Mammary epithelial cell (primary cell): ENCODE measurements at regions of chr3 and their contacts with region 1.

Region 1: DNA sequence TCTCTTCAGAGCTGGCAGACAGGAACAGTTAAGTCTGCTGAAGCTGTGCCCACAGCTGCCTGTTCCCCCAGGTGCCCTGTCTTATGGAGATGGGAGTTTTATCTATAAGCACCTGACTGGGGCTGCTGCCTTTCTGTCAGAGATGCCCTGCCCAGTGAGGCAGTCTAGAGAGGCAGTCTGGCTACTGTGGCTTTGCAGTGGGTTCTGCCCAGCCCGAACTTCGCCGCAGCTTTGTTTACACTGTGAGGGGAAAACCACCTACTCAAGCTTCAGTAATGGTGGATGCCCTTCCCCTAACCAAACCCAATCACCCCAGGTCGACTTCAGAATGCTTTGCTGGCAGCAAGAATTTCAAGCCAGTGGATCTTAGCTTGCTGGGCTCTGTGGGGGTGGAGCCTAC is 91.2 kb downstream of the SLC25A26 start:
- DNase-seq: no peak
- H3K4me3 ChIP-seq: no peak overlapping the region
- H3K27ac ChIP-seq: no peak overlapping the region
- H3K4me1 ChIP-seq: no peaks in the 10 kb centered on the region
- H3K27me3 ChIP-seq: no peaks in the 10 kb centered on the region
- CTCF ChIP-seq: no peak

Region 2: GRCh38 chr3:66153481-66154443 is 158.3 kb before region 1 on chr3:
- CTCF ChIA-PET with region 1: no interaction called
- dilution Hi-C with region 1: no loop called
- in situ Hi-C with region 1: no loop called
- intact Hi-C with region 1: no loop called
- DNase-seq: no peak
- H3K4me3 ChIP-seq: no peak overlapping the region
- H3K27ac ChIP-seq: no peak overlapping the region
- H3K4me1 ChIP-seq: no peaks in the 10 kb centered on the region
- H3K27me3 ChIP-seq: peaks cover 5% of the 10 kb centered on the region
- CTCF ChIP-seq: no peak

Region 3: GRCh38 chr3:66398246-66399034 is 86.4 kb after region 1 on chr3:
- CTCF ChIA-PET with region 1: no interaction called
- dilution Hi-C with region 1: loop called (anchors 5 kb)
- in situ Hi-C with region 1: no loop called
- intact Hi-C with region 1: no loop called
- DNase-seq: peak; percentile 17
- H3K4me3 ChIP-seq: no peak overlapping the region
- H3K27ac ChIP-seq: no peak overlapping the region
- H3K4me1 ChIP-seq: no peaks in the 10 kb centered on the region
- H3K27me3 ChIP-seq: no peaks in the 10 kb centered on the region
- CTCF ChIP-seq: no peak